Activated naive CD4-positive, alpha-beta T cell treated with anti-CD3 and anti-CD28 coated beads for 36 hours (primary cell): ENCODE measurements at regions of chr10 and their contacts with region 1.

Region 1: GRCh38 chr10:131885391-131886161 is 15.2 kb upstream of the PPP2R2D start:
- DNase-seq: peak; percentile 86
- H3K4me3 Mint-ChIP-seq: no peak overlapping the region
- H3K27ac Mint-ChIP-seq: no peak overlapping the region
- H3K4me1 Mint-ChIP-seq: peaks cover 13% of the 10 kb centered on the region
- H3K27me3 Mint-ChIP-seq: no peaks in the 10 kb centered on the region

Region 2: DNA sequence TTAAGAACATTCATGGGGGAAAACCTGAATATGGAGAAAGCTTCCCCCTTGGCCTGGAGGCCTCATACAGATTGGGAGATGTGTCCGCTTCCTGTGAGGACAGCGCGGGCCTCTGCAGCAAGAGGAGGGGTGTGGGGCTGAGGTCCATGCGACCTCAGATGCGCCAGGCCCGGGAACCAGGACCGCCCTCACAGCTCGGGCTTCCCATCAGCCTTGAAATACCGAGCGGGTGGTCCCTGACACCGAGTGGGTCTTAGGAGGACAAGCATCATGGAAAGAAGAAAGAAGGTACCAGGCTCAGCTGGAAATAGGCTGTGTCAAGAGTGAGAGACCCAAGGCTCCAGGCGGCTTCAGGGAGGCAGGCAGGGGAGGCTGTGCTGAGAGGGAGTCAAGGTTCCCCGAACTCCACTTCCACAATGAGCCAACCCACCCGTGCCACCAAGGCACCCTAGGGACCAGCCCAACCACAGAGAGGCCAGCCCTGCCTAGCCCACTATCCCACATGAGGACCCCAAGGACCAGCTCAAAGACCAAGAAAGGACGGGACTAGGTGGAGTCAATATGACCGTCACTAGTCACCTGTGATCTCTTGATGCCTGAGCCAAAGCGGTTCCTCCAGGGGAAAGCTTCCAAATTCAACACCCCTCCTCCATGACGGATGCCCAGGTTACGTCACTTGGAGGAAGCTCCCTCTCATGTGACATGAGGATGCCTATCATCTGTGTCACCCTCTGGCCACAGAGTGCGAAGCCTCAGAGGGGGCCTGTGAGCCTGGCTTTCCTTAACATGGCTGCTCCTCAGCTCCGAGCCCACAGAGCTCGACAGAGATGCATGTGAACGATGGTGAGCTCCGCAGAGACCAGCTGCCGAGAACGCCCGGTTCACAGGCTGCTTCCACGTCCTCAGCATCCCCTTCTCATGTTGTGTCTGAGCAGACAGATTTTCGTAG is 677.7 kb before region 1 on chr10:
- CTCF ChIA-PET with region 1: no interaction called
- intact Hi-C with region 1: no loop called
- DNase-seq: no peak
- H3K4me3 Mint-ChIP-seq: no peak overlapping the region
- H3K27ac Mint-ChIP-seq: no peak overlapping the region
- H3K4me1 Mint-ChIP-seq: no peaks in the 10 kb centered on the region
- H3K27me3 Mint-ChIP-seq: no peaks in the 10 kb centered on the region

Region 3: DNA sequence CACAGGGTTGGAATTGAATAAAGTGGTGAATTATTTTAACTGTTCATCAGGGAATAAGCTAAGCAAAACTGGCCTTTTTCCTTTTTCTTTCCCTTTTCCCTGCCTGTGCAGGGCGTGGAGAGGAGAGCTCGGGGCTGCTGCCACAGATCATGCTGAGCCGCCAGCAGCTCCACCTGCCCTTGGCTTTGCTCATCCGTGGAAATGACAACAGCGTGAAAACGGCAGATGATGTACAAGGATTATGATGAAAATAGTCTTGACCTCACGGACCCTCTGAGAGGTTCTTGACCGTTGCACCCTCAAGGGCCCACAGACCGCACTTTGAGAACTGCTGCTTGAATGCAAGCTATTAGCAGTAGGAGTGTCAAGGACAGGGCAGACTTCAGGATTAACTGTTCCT is 25.9 kb after region 1 on chr10:
- CTCF ChIA-PET with region 1: interaction called, 10 read pairs
- intact Hi-C with region 1: no loop called
- DNase-seq: no peak
- H3K4me3 Mint-ChIP-seq: no peak overlapping the region
- H3K27ac Mint-ChIP-seq: peak overlapping the region; percentile 18
- H3K4me1 Mint-ChIP-seq: peaks cover 79% of the 10 kb centered on the region
- H3K27me3 Mint-ChIP-seq: no peaks in the 10 kb centered on the region

Region 4: GRCh38 chr10:131981429-131982184 is 96.0 kb after region 1 on chr10 and contains the start of gene BNIP3:
- CTCF ChIA-PET with region 1: interaction called, 9 read pairs
- intact Hi-C with region 1: loop called (anchors 1 kb)
- DNase-seq: peak; percentile 94
- H3K4me3 Mint-ChIP-seq: peak within 1 kb of the TSS; percentile 83
- H3K27ac Mint-ChIP-seq: peak within 1 kb of the TSS; percentile 65
- H3K4me1 Mint-ChIP-seq: peaks cover 35% of the 10 kb centered on the region
- H3K27me3 Mint-ChIP-seq: no peaks in the 10 kb centered on the region
- total RNA-seq, gene BNIP3: 55.5 to 55.9 TPM

Region 5: DNA sequence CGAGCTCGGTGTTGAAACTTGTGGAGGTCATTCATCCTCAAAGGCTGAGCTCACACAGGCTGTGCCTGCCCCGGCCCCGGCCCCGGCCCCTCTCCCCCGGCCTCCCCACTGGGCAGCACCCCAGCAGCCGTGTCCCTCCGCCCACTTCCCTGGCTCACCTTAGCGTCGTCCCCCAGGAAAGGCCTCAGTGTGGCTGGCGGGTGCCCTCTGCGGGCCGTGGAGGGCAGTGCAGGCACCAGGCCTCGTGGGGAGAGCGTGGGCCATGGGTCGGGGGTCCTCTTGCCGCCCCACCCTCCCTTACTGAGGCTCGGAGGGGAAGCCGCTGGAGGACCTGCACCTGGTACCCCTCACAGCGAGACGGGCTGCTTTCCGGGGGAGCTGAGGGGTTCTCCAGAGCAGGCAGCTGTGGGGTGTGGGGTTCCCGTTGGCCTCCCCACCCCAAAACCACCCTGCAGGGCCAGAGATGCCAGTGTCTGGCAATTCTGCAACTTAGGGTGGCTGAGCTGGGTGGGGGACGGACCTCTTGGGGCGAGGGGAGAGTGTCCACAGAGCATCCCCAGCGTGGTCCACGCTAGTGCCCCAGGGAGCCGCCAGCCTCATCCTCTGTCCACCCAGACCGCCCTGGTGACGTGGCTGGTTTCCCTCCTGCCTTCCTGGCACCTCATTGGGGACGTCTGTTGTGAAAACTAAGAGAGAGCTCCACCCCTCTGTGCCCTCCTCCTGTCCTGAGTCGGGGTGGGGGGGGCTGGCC is 257.0 kb after region 1 on chr10:
- CTCF ChIA-PET with region 1: interaction called, 5 read pairs
- intact Hi-C with region 1: loop called (anchors 1 kb)
- DNase-seq: peak; percentile 57
- H3K4me3 Mint-ChIP-seq: no peak overlapping the region
- H3K27ac Mint-ChIP-seq: no peak overlapping the region
- H3K4me1 Mint-ChIP-seq: peaks cover 1% of the 10 kb centered on the region
- H3K27me3 Mint-ChIP-seq: no peaks in the 10 kb centered on the region